SK-N-SH (cell line): ENCODE measurements at regions of chr12 and their contacts with region 1.

Region 1: DNA sequence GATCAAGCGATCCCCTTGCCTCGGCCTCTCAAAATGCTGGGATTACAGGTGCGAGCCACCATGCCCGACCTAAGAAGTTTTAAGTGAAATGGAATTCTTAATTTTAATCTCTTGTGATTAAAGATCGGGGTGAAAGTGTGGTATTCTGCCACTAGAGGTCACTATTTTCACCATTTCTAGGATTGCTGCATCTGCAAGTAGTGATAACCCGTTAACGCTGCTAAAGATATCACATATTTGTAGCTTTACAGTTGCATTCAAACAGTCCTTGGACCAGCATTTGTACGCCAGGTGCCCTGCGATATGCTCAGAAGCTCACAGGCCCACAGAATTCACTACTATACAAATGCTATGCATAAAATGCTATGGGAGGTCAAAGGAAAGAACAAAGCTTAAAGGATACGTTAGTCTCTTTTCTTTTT is 19.3 kb downstream of the CCDC62 start:
- DNase-seq: peak; percentile 74
- H3K4me3 ChIP-seq: no peak overlapping the region
- H3K27ac ChIP-seq: no peak overlapping the region
- H3K4me1 ChIP-seq: no peaks in the 10 kb centered on the region; a peak in 1 of 4 replicates
- H3K27me3 ChIP-seq: no peaks in the 10 kb centered on the region
- CTCF ChIP-seq: peak; percentile 78
- EP300 ChIP-seq: no peak
- RAD21 ChIP-seq: peak; percentile 82

Region 2: DNA sequence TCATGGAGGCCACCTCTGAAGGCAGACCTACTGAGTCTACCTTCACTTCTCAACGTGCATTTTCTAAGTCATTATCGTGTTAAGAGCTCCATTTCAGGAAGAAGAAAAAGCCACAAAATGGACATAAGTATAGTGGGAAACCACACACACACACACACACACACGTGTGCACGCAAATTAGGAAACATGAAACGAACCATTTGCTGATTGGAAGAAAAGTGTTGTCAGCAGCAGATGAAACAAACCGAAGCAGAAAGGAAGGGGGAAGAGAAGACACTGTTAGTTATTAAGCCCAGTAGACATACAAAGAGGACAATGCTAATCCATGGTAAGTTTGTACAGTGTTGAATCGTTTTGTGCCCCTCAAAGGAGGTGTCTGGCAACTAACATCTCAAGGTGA is 517.5 kb before region 1 on chr12:
- CTCF ChIA-PET with region 1: no interaction called
- POLR2A ChIA-PET with region 1: no interaction called
- DNase-seq: no peak
- H3K4me3 ChIP-seq: no peak overlapping the region
- H3K27ac ChIP-seq: no peak overlapping the region
- H3K4me1 ChIP-seq: no peaks in the 10 kb centered on the region; a peak in 1 of 4 replicates
- H3K27me3 ChIP-seq: no peaks in the 10 kb centered on the region
- CTCF ChIP-seq: no peak
- EP300 ChIP-seq: no peak
- RAD21 ChIP-seq: no peak

Region 3: GRCh38 chr12:122571821-122572220 is 221.9 kb before region 1 on chr12:
- CTCF ChIA-PET with region 1: no interaction called
- POLR2A ChIA-PET with region 1: no interaction called
- DNase-seq: no peak
- H3K4me3 ChIP-seq: no peak overlapping the region
- H3K27ac ChIP-seq: no peak overlapping the region
- H3K4me1 ChIP-seq: no peaks in the 10 kb centered on the region
- H3K27me3 ChIP-seq: no peaks in the 10 kb centered on the region
- CTCF ChIP-seq: no peak
- EP300 ChIP-seq: no peak
- RAD21 ChIP-seq: no peak

Region 4: DNA sequence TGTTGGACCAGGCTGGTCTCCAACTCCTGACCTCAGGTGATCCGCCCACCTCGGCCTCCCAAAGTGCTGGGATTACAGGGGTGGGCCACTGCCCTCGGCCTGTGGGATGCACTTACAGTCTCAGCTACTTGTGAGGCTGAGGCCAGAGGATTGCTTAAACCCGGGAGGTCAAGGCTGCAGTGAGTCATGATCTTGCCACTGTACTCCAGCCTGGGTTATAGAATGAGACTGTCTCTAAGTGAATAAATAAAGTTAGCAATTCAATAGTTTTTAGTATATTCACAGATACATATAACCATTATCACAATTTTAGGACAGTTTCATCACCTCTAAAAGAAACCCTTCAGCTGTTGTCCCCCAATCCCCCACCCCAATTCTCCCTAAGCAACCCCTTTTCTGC is 151.7 kb before region 1 on chr12:
- CTCF ChIA-PET with region 1: interaction called, 13 read pairs
- POLR2A ChIA-PET with region 1: no interaction called
- DNase-seq: no peak
- H3K4me3 ChIP-seq: no peak overlapping the region
- H3K27ac ChIP-seq: no peak overlapping the region
- H3K4me1 ChIP-seq: no peaks in the 10 kb centered on the region
- H3K27me3 ChIP-seq: no peaks in the 10 kb centered on the region
- CTCF ChIP-seq: no peak
- EP300 ChIP-seq: no peak
- RAD21 ChIP-seq: no peak

Region 5: GRCh38 chr12:122726080-122726558 is 67.6 kb before region 1 on chr12:
- CTCF ChIA-PET with region 1: no interaction called
- POLR2A ChIA-PET with region 1: no interaction called
- DNase-seq: no peak
- H3K4me3 ChIP-seq: no peak overlapping the region
- H3K27ac ChIP-seq: no peak overlapping the region
- H3K4me1 ChIP-seq: no peaks in the 10 kb centered on the region
- H3K27me3 ChIP-seq: no peaks in the 10 kb centered on the region
- CTCF ChIP-seq: no peak
- EP300 ChIP-seq: no peak
- RAD21 ChIP-seq: no peak

Region 6: GRCh38 chr12:122825773-122826724 is 32.4 kb after region 1 on chr12:
- CTCF ChIA-PET with region 1: interaction called, 38 read pairs
- POLR2A ChIA-PET with region 1: no interaction called
- DNase-seq: peak; percentile 48
- H3K4me3 ChIP-seq: peak overlapping the region; percentile 36 to 58
- H3K27ac ChIP-seq: no peak overlapping the region
- H3K4me1 ChIP-seq: no peaks in the 10 kb centered on the region
- H3K27me3 ChIP-seq: no peaks in the 10 kb centered on the region
- CTCF ChIP-seq: no peak
- EP300 ChIP-seq: no peak
- RAD21 ChIP-seq: no peak

Region 7: GRCh38 chr12:122841544-122842321 is 48.0 kb after region 1 on chr12:
- CTCF ChIA-PET with region 1: interaction called, 16 read pairs
- POLR2A ChIA-PET with region 1: no interaction called
- DNase-seq: peak; percentile 55
- H3K4me3 ChIP-seq: no peak overlapping the region
- H3K27ac ChIP-seq: peak overlapping the region; percentile 49 to 77
- H3K4me1 ChIP-seq: peaks cover 14 to 66% of the 10 kb centered on the region in 2 experiments
- H3K27me3 ChIP-seq: no peaks in the 10 kb centered on the region
- CTCF ChIP-seq: no peak
- EP300 ChIP-seq: no peak
- RAD21 ChIP-seq: no peak

Region 8: DNA sequence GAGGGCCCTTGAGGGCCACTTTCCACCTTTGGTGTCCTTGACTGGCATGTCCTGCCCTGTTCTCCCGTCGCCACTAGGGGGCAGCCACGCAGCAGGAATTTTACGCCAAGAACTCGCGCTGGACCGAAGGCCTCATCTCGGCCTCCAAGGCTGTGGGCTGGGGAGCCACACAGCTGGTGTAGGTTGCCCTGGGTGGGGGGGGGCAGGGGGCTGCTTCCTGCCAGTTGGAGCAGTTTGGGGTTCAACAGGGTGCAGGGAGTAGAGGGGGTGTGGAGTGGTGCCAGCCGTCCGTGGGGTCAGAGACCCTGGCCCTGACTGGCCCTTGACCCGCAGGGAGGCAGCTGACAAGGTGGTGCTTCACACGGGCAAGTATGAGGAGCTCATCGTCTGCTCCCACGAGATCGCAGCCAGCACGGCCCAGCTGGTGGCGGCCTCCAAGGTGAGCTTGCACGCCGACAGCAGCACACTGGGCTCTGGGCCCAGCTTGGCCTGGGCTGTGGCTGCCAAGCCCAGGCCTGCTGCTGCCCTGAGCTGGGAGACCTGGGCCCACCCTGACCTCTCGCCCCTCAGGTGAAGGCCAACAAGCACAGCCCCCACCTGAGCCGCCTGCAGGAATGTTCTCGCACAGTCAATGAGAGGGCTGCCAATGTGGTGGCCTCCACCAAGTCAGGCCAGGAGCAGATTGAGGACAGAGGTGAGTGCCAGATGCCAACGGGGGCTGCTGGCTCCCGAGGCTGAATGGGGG is 66.8 kb after region 1 on chr12:
- CTCF ChIA-PET with region 1: interaction called, 37 read pairs
- POLR2A ChIA-PET with region 1: no interaction called
- DNase-seq: peak; percentile 89
- H3K4me3 ChIP-seq: peak overlapping the region in 1 of 2 experiments; percentile 44; a peak in 1 of 4 replicates
- H3K27ac ChIP-seq: no peak overlapping the region; a peak in 1 of 4 replicates
- H3K4me1 ChIP-seq: peaks cover 0 to 22% of the 10 kb centered on the region in 2 experiments; a peak in 1 of 4 replicates
- H3K27me3 ChIP-seq: no peaks in the 10 kb centered on the region
- CTCF ChIP-seq: peak; percentile 85
- EP300 ChIP-seq: no peak
- RAD21 ChIP-seq: peak; percentile 92

Region 9: DNA sequence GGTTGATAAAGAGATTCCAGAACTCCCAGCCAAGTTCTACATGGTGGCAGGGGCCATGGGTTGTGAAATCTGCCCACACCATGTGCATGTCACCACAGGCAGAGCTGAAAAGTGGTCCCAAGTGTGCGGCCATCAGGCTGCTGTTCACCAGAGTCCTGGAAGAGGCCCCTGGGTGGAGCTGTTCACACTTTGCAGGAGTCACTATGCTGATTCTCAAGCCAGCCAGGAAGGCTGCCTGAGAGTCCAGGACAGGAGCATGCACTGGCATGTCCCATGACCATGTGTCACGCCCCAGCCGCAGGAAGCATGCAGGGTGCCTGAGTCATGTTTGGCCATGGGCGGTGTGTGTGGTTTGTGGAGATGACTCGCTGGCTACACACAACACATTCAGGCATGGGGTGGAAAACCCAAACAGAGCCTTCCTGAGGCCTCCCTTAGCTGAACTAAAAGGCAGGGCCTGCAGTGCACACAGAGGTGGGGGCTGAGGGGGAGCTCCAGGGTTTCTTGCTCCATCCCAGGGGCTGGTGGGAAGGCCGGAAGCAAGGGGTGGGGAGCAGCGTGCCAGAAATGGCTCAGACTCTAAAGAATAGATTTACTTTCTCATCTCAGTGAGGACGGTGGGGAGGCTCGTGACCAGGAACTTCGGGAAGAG is 153.1 kb after region 1 on chr12:
- CTCF ChIA-PET with region 1: interaction called, 70 read pairs
- POLR2A ChIA-PET with region 1: no interaction called
- DNase-seq: no peak
- H3K4me3 ChIP-seq: no peak overlapping the region
- H3K27ac ChIP-seq: peak overlapping the region; percentile 0 to 89; a peak in 2 of 4 replicates
- H3K4me1 ChIP-seq: peaks cover 0 to 37% of the 10 kb centered on the region in 2 experiments; a peak in 2 of 4 replicates
- H3K27me3 ChIP-seq: no peaks in the 10 kb centered on the region
- CTCF ChIP-seq: peak; percentile 56
- EP300 ChIP-seq: peak in 1 of 2 experiments; percentile 54; a peak in 1 of 4 replicates
- RAD21 ChIP-seq: no peak

Region 10: DNA sequence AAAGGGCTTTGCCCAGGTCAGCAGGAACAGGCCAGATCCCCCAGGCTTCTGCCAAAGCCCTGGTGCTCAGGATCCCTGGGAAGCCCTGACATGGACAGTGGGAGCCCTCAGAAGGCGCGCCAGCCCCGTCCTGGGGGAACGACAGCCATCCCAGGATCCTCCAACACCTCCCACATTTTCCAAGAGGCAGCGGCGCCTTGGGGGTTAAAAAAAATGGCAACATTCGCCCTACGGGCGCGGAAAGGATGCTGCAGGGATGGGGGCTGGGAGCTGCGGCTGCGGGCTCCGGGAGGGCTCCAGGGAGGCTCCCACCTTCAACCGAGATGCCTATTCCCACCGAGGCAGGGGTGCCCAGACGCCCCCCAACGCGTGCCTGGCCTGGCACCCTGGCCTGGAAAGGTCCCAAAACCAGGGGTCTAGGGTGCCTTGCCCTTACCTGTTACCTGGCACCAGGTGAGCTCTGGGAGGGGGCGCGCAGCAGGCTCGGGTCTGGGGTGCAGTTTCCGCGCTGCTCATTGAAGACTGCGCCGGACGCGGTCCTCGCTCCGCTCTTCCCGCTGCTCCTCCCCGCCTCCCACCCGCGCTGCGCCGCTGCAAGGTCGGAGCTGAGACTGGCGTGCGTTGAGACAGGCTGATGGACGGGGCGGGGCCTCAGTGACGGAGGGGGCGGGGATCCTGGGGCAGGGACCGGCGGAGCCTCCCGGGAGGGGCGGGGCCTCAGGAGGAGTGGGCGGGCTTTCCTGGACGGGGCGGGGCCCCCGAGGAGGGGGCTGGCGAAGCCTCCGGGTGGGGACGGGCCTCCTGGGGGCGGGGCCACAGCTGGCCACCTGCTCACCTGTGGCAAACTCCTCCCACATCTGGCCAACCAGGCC is 172.4 kb after region 1 on chr12 and contains the start of gene ABCB9:
- CTCF ChIA-PET with region 1: interaction called, 11 read pairs
- POLR2A ChIA-PET with region 1: no interaction called
- DNase-seq: peak; percentile 99
- H3K4me3 ChIP-seq: peak within 1 kb of the TSS; percentile 73 to 90
- H3K27ac ChIP-seq: peak within 1 kb of the TSS in 1 of 2 experiments; percentile 45; a peak in 1 of 4 replicates
- H3K4me1 ChIP-seq: peaks cover 6 to 26% of the 10 kb centered on the region in 2 experiments; a peak in 2 of 4 replicates
- H3K27me3 ChIP-seq: no peaks in the 10 kb centered on the region
- CTCF ChIP-seq: no peak
- EP300 ChIP-seq: no peak
- RAD21 ChIP-seq: no peak
- polyA plus RNA-seq, gene ABCB9: 6.2 and 7.6 TPM in 2 replicates

Region 11: GRCh38 chr12:123180171-123180570 is 386.5 kb after region 1 on chr12:
- CTCF ChIA-PET with region 1: no interaction called
- POLR2A ChIA-PET with region 1: no interaction called
- DNase-seq: no peak
- H3K4me3 ChIP-seq: no peak overlapping the region
- H3K27ac ChIP-seq: no peak overlapping the region
- H3K4me1 ChIP-seq: no peaks in the 10 kb centered on the region
- H3K27me3 ChIP-seq: no peaks in the 10 kb centered on the region
- CTCF ChIP-seq: no peak
- EP300 ChIP-seq: no peak
- RAD21 ChIP-seq: no peak